ENCODE measurements at regions of chr3 and their contacts with region 1.

Region 1: DNA sequence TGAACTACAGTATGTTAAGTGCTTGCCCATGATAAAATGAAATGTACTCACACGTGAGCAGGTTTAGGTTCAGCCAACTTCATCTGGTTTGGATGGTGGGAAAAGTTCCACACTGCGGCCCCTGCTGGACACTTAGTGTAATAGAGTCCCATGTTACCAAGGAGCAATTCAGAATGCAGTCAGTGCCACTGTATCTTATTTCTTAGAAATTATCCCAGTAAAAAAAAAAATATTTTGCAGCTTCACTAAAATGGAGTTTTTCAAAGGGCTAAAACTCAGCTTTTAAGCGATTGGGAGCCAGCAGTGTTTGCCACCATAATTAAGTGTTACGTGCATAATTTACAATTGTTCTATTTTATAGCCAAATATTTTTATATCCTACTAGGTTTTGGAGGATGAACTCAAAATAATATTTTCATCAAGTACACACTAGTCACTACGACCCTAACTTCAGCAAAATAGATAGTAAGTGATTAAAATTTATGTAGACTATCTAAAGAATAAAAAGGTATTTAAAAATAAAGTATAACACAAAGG is 371.7 kb upstream of the GBE1 start:
- DNase-seq: peak; percentile 73
- H3K4me3 Mint-ChIP-seq: no peak overlapping the region
- H3K27ac Mint-ChIP-seq: no peak overlapping the region
- H3K4me1 Mint-ChIP-seq: no peaks in the 10 kb centered on the region
- H3K27me3 Mint-ChIP-seq: no peaks in the 10 kb centered on the region
- CTCF ChIP-seq: peak; percentile 56

Region 2: DNA sequence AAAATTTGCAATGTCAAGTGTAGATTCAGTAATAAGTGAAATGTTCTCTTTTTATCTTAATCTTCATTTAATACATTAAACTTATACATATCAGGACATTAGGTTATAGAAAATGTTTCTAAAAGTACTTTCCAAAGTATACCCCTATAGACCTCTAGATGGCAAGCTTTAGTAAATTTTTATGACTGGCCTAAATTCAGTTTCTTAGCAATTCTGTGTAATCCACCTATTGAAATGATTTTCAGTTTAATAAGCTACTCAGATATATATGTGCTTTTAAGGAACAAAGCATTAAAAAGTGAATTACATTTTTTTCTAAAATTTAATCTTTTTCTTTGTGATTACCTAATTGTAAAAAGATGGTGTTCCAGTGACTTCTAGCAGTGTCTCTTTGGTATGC is 713.9 kb before region 1 on chr3:
- CTCF ChIA-PET with region 1: no interaction called
- POLR2A ChIA-PET with region 1: no interaction called
- intact Hi-C with region 1: loop called (anchors 5 kb)
- DNase-seq: peak; percentile 9
- H3K4me3 Mint-ChIP-seq: no peak overlapping the region
- H3K27ac Mint-ChIP-seq: no peak overlapping the region
- H3K4me1 Mint-ChIP-seq: no peaks in the 10 kb centered on the region
- H3K27me3 Mint-ChIP-seq: no peaks in the 10 kb centered on the region
- CTCF ChIP-seq: peak; percentile 27

Region 3: GRCh38 chr3:81581966-81582599 is 551.1 kb before region 1 on chr3:
- CTCF ChIA-PET with region 1: interaction called, 9 read pairs
- POLR2A ChIA-PET with region 1: no interaction called
- intact Hi-C with region 1: loop called (anchors 5 kb)
- DNase-seq: peak; percentile 55
- H3K4me3 Mint-ChIP-seq: no peak overlapping the region
- H3K27ac Mint-ChIP-seq: no peak overlapping the region
- H3K4me1 Mint-ChIP-seq: peaks cover 6% of the 10 kb centered on the region
- H3K27me3 Mint-ChIP-seq: no peaks in the 10 kb centered on the region
- CTCF ChIP-seq: peak; percentile 58

Region 4: DNA sequence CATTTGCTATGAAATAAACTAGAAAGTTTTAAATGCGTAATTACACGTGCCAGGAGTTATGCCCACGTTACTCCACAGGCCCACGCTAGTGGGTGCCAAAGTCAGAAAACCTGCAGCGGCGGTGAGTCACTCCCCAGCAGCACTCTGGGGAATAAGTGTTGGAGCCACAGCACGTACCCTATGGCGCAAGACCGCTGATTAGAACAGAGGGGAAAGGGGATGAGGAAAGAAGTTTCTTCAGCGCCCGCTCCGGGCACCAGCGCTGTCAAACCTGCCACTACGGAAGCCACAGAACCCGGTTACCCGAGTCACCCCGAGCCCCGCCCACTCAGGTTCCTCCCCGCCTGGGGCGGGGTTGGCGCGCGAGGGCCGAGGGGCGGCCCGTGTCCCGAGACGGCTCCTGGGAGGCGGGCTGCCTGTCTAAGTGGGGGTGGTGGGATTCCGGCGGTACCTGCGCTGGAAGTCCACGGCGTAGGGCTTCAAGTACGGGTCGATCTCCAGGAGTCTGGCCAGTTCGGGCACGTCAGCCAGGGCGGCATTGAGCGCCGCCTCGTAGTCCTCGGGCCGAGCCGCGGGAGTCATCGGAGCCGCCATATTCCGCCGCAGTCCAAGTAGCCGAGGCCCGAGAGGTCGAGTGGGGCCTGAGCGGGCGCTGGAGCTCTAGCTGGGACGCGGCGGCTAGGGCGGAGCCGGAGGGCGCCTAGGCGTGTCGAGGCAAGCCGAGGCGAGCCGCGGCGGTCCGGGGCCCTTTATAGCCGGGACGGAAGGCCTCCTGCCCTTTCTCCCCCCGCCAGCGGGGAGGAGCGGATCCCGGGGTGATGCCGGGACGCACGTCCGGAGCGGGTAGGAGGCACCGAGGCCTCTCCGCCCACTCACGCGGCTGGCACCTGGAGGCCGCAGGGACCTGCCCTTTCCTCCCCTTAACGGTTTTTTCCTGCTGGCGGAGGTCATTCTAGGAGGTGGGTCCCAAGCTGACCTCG is 371.9 kb before region 1 on chr3 and contains the start of gene GBE1:
- CTCF ChIA-PET with region 1: interaction called, 7 read pairs
- POLR2A ChIA-PET with region 1: no interaction called
- intact Hi-C with region 1: loop called (anchors 5 kb)
- DNase-seq: peak; percentile 98
- H3K4me3 Mint-ChIP-seq: peak within 1 kb of the TSS; percentile 77
- H3K27ac Mint-ChIP-seq: peak within 1 kb of the TSS; percentile 94
- H3K4me1 Mint-ChIP-seq: peaks cover 56% of the 10 kb centered on the region
- H3K27me3 Mint-ChIP-seq: no peaks in the 10 kb centered on the region
- CTCF ChIP-seq: peak; percentile 24
- total RNA-seq, gene GBE1: 41.8 and 58.1 TPM in 2 replicates

Region 5: GRCh38 chr3:81995329-81995728 is 137.8 kb before region 1 on chr3:
- CTCF ChIA-PET with region 1: interaction called, 11 read pairs
- POLR2A ChIA-PET with region 1: no interaction called
- intact Hi-C with region 1: no loop called
- DNase-seq: no peak
- H3K4me3 Mint-ChIP-seq: no peak overlapping the region
- H3K27ac Mint-ChIP-seq: no peak overlapping the region
- H3K4me1 Mint-ChIP-seq: no peaks in the 10 kb centered on the region
- H3K27me3 Mint-ChIP-seq: no peaks in the 10 kb centered on the region
- CTCF ChIP-seq: no peak

Region 6: GRCh38 chr3:82114589-82114988 is 18.5 kb before region 1 on chr3:
- CTCF ChIA-PET with region 1: interaction called, 10 read pairs
- POLR2A ChIA-PET with region 1: no interaction called
- intact Hi-C with region 1: no loop called
- DNase-seq: no peak
- H3K4me3 Mint-ChIP-seq: no peak overlapping the region
- H3K27ac Mint-ChIP-seq: no peak overlapping the region
- H3K4me1 Mint-ChIP-seq: no peaks in the 10 kb centered on the region
- H3K27me3 Mint-ChIP-seq: no peaks in the 10 kb centered on the region
- CTCF ChIP-seq: no peak

Region 7: DNA sequence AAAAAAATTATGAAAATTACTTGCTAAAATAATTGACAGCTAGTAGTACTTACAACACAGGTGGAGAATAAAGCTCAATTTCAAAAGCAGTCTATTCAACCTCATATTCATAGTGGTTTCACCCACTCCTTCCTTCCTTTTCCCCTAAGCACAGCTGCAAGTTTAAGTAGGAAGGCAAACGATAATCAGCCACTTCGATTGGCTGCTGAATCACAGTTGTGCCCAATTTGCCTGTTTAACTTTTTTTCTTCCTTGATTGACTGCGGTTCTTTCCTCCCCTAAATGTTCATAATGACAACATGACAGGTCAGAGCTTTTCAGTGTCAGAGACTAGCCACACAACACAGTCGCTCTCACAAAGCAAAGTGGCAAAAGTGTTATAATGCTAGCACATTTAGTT is 96.3 kb after region 1 on chr3:
- CTCF ChIA-PET with region 1: no interaction called
- POLR2A ChIA-PET with region 1: no interaction called
- intact Hi-C with region 1: no loop called
- DNase-seq: no peak
- H3K4me3 Mint-ChIP-seq: no peak overlapping the region
- H3K27ac Mint-ChIP-seq: no peak overlapping the region
- H3K4me1 Mint-ChIP-seq: peaks cover 5% of the 10 kb centered on the region
- H3K27me3 Mint-ChIP-seq: no peaks in the 10 kb centered on the region
- CTCF ChIP-seq: no peak

Region 8: DNA sequence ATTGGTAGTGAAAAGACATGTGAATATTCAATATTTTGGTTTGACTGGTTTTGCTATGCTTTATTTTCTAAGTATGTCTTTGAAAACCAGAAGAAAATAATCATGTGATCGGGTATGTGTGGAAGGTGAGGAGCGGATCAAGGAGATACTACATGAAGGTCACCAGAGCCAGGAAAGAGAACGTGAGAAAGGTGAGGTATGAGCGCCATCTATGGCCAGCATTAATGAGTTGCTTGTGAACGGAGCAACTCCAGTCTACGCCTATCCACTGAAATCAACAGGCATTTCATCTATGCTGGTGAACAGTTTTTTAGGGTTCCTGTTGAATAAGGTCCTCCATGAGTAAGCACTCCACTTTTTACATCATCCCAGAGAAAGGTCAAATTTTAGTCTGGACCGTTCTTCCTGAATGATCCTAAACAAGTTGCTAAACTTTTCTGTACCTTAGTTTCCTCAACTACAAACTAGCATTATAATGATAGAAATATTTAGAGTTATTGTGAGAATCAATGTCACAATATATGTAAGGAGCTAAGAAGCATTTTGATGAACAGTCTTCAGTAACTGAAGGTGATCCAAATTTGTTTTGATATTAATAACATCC is 1390.4 kb after region 1 on chr3:
- CTCF ChIA-PET with region 1: no interaction called
- POLR2A ChIA-PET with region 1: no interaction called
- intact Hi-C with region 1: loop called (anchors 2 kb)
- DNase-seq: peak; percentile 82
- H3K4me3 Mint-ChIP-seq: no peak overlapping the region
- H3K27ac Mint-ChIP-seq: no peak overlapping the region
- H3K4me1 Mint-ChIP-seq: peaks cover 6% of the 10 kb centered on the region
- H3K27me3 Mint-ChIP-seq: no peaks in the 10 kb centered on the region
- CTCF ChIP-seq: peak; percentile 76

Measured in MCF 10A (cell line).